ENCODE measurements at regions of chr1 and their contacts with region 1.

Region 1: DNA sequence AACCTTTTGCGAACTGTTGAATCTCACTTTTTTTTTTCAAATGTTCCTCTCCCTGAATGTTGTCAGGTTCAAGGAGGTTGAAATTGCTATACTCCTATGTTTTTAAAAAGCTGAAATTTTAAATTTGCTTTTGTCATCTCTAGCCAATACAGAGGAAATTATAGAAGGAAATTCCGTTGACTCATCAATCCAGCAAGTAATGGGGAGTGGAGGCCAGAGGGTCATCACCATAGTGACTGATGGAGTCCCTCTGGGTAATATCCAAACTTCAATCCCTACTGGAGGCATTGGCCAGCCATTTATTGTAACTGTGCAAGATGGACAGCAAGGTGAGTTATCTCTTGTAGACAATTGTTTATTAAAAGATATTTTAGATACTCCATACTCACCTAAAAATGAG is 36.3 kb downstream of the GABPB2 start:
- DNase-seq: no peak
- H3K4me3 ChIP-seq: no peak overlapping the region
- H3K27ac ChIP-seq: no peak overlapping the region
- H3K4me1 ChIP-seq: no peaks in the 10 kb centered on the region
- H3K27me3 ChIP-seq: no peaks in the 10 kb centered on the region
- CTCF ChIP-seq: no peak
- POLR2A ChIP-seq: no peak

Region 2: GRCh38 chr1:151070474-151071276 is 36.2 kb before region 1 on chr1 and contains the start of gene GABPB2:
- intact Hi-C with region 1: no loop called
- DNase-seq: peak; percentile 95 to 96
- H3K4me3 ChIP-seq: peak within 1 kb of the TSS; percentile 70 to 98
- H3K27ac ChIP-seq: peak within 1 kb of the TSS; percentile 99 to 100
- H3K4me1 ChIP-seq: no peaks in the 10 kb centered on the region
- H3K27me3 ChIP-seq: no peaks in the 10 kb centered on the region
- CTCF ChIP-seq: peak; percentile 81 to 91 (median 87)
- POLR2A ChIP-seq: peak in 1 of 2 donors; percentile 66
- total RNA-seq, gene GABPB2: 7.4 to 285 (median 21.2) TPM

Region 3: GRCh38 chr1:151156515-151156819 is 49.6 kb after region 1 on chr1 and contains the start of gene TNFAIP8L2:
- intact Hi-C with region 1: loop called (anchors 10 kb)
- DNase-seq: no peak
- H3K4me3 ChIP-seq: no peak within 1 kb of the TSS
- H3K27ac ChIP-seq: no peak within 1 kb of the TSS
- H3K4me1 ChIP-seq: no peaks in the 10 kb centered on the region
- H3K27me3 ChIP-seq: no peaks in the 10 kb centered on the region
- CTCF ChIP-seq: no peak
- POLR2A ChIP-seq: no peak
- total RNA-seq, gene TNFAIP8L2: 1.0 to 27.1 (median 3.1) TPM